Naive thymus-derived CD4-positive, alpha-beta T cell (primary cell): ENCODE measurements at regions of chr5 and their contacts with region 1.

Region 1: GRCh38 chr5:73170522-73170921 is 2.5 kb upstream of the TMEM174 start:
- DNase-seq: no peak
- ATAC-seq: no peak
- H3K4me3 ChIP-seq: no peak overlapping the region
- H3K4me3 Mint-ChIP-seq: no peak overlapping the region
- H3K27ac ChIP-seq: no peak overlapping the region
- H3K27ac Mint-ChIP-seq: no peak overlapping the region
- H3K4me1 ChIP-seq: no peaks in the 10 kb centered on the region
- H3K4me1 Mint-ChIP-seq: peaks cover 0 to 4% (median 0%) of the 10 kb centered on the region in 7 donors
- H3K27me3 ChIP-seq: peaks cover 0 to 6% of the 10 kb centered on the region in 2 donors
- H3K27me3 Mint-ChIP-seq: peaks cover 76 to 91% (median 84%) of the 10 kb centered on the region in 5 donors

Region 2: GRCh38 chr5:73088026-73088425 is 82.5 kb before region 1 on chr5:
- CTCF ChIA-PET with region 1: no interaction called
- POLR2A ChIA-PET with region 1: no interaction called
- intact Hi-C with region 1: loop called in 1 of 2 experiments (anchors 1 kb)
- DNase-seq: no peak
- ATAC-seq: no peak
- H3K4me3 ChIP-seq: no peak overlapping the region
- H3K4me3 Mint-ChIP-seq: no peak overlapping the region
- H3K27ac ChIP-seq: no peak overlapping the region
- H3K27ac Mint-ChIP-seq: no peak overlapping the region
- H3K4me1 ChIP-seq: no peaks in the 10 kb centered on the region
- H3K4me1 Mint-ChIP-seq: no peaks in the 10 kb centered on the region
- H3K27me3 ChIP-seq: peaks cover 0 to 3% of the 10 kb centered on the region in 2 donors
- H3K27me3 Mint-ChIP-seq: peaks cover 7 to 28% (median 15%) of the 10 kb centered on the region in 5 donors

Region 3: DNA sequence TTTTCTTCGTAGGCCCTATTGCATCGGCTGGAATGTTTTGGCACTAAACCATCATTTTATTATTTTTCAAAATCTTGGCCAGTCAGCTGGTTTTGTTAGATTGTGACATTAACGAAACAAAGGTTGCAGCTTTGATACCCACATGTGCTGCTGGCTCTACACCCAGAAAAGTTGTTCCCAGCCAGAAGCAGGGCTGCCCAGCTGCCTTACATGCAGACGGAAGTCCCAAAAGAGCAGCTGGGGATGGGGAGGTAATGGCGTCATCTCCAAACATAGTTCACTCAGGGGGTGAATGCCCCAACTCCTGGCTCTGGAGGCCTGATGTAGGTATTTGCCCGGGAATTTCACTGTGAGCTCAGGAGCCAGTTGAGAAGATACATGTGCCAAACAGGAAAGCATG is 26.8 kb before region 1 on chr5:
- CTCF ChIA-PET with region 1: no interaction called
- POLR2A ChIA-PET with region 1: no interaction called
- intact Hi-C with region 1: no loop called
- DNase-seq: no peak
- ATAC-seq: no peak
- H3K4me3 ChIP-seq: no peak overlapping the region
- H3K4me3 Mint-ChIP-seq: no peak overlapping the region
- H3K27ac ChIP-seq: no peak overlapping the region
- H3K27ac Mint-ChIP-seq: no peak overlapping the region
- H3K4me1 ChIP-seq: no peaks in the 10 kb centered on the region
- H3K4me1 Mint-ChIP-seq: no peaks in the 10 kb centered on the region
- H3K27me3 ChIP-seq: peaks cover 0 to 3% of the 10 kb centered on the region in 2 donors
- H3K27me3 Mint-ChIP-seq: peaks cover 50 to 70% (median 66%) of the 10 kb centered on the region in 5 donors